Sciatic nerve (tissue), 2 donors: ENCODE measurements at regions of chrX and their contacts with region 1.

Region 1: DNA sequence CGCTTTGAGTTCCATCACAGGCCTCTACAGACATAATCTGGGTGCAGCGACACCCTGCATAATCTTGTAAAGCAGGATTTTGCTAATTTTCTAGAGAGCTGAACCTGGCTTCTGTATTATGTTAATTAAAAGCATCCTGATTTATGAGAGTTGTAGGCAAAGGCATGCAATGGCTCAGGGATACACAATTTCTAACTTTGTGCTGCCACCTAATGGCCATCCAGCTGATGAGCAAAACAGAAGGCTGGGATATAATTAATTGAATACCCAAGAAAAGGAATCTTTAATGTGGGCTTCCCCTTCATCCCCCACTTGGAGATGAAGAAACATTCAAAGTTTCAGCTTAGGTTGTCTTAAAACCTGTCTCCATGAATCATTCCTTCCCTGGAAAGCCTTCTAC is 78.1 kb downstream of the BMP15 start:
- DNase-seq: no peak
- ATAC-seq: no peak

Region 2: GRCh38 chrX:50691820-50692219 is 296.8 kb before region 1 on chrX:
- intact Hi-C with region 1: loop called (anchors 10 kb)
- DNase-seq: no peak
- ATAC-seq: peak; percentile 62